Dorsolateral prefrontal cortex (tissue), 120 donors: ENCODE measurements at regions of chr4 and their contacts with region 1.

Region 1: DNA sequence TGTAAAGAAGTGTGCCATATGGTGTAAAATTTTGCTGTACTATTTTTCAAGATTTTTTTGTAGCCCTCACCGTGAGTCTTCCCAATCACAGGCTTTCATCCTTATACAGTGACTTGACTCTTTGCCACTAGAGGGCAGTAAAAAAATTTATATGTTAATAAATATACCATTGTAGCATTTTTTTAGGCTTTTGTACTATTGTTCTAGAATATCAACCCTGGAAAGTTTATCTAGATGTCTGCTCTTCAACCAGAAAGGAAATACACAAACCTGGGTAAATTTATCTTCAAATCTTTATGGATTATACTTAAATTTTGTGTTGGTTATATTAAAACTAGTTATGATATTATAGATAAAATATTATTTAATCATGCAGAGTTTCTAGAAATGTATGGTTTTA is 235.3 kb downstream of the TENM3 start:
- DNase-seq: no peak
- H3K4me3 ChIP-seq: no peak overlapping the region
- H3K27ac ChIP-seq: no peak overlapping the region
- H3K27me3 ChIP-seq: peaks cover 0 to 3% (median 0%) of the 10 kb centered on the region in 45 donors
- CTCF ChIP-seq: peak; percentile 56 to 82 (median 74)

Region 2: GRCh38 chr4:182404376-182404775 is 74.1 kb before region 1 on chr4:
- intact Hi-C with region 1: no loop called
- DNase-seq: no peak
- H3K4me3 ChIP-seq: no peak overlapping the region
- H3K27ac ChIP-seq: no peak overlapping the region
- H3K27me3 ChIP-seq: peaks cover 0 to 28% (median 2%) of the 10 kb centered on the region in 45 donors
- CTCF ChIP-seq: no peak

Region 3: DNA sequence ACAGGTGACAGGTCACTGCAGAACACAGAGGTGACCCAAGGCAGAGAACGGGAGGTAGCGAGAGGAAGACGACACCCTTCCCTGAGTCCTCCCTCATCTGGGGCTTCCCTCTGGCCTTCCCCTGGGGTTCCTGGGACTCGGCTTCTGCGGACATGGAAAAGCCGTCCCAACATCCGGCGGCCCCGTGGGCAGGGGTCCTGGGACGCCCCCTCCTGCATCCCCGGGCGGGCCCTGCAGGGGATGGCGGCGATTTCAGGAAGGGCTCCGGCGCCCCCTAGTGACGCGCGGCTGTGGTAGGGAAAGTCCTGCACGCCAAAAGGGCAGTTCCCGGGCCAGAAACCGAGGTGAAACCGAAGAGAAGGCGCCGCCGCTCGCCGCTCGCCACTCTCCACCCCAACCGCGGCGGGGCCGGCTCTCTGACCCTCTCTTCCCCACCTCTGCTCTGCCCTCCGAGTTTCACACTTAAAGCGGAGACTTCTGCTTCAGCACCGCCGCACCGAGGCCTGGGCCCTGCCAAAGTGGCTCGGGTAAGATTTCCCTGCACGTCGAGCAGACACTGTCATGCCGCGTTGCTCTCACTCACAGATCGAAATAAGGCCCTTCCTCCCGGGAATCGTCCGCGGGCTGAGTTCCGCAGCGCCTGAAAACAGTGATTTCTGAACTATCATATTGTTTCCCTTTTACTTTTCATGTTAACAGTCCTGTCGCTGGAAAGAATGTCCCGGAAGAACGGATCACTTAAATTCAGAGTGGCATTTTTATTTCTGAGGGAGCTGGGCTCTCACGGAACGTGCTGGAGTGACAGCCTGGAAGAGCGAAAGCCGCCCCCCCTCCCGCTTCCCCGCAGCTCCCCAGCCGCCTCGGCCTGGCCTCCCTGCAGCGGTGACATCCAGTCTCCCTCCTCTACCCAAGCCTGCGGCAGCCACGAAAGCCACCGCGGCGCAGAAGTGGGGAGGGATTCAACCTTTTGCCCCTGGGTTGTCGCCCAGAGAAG is 328.1 kb after region 1 on chr4:
- intact Hi-C with region 1: loop called (anchors 10 kb)
- DNase-seq: peak; percentile 58 to 84 (median 68)
- H3K4me3 ChIP-seq: peak overlapping the region; percentile 34 to 75 (median 58)
- H3K27ac ChIP-seq: peak overlapping the region in 7 of 59 donors; percentile 38 to 73 (median 50)
- H3K27me3 ChIP-seq: peaks cover 0 to 4% (median 0%) of the 10 kb centered on the region in 45 donors
- CTCF ChIP-seq: peak; percentile 58 to 97 (median 86)

Region 4: DNA sequence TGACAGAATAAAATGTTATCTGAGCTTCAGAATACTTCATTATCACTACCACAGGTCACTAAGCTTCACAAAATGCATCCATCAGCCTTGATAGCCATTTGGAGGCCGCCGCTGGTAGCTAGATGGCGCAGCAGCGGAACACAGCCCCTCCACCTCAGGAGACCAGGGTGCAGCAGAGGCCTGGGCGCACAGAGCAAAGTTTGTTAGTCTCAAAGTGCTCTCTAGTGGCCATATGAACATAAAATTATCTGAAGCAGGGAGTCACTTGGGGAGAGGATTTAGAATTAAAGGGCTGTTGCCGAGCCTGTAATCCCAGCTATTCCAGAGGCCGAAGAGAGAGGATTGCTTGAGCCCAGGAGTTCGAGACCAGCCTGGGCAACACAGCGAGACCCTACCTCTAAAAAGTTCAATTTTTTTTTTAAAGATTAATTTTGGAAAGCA is 446.8 kb after region 1 on chr4:
- intact Hi-C with region 1: loop called in 1 of 2 experiments (anchors 10 kb)
- DNase-seq: peak in 9 of 10 donors; percentile 48 to 72 (median 61)
- H3K4me3 ChIP-seq: no peak overlapping the region
- H3K27ac ChIP-seq: no peak overlapping the region
- H3K27me3 ChIP-seq: no peaks in the 10 kb centered on the region
- CTCF ChIP-seq: peak in 55 of 56 donors; percentile 14 to 89 (median 69)